PC-9 (cell line): ENCODE measurements at regions of chr9 and their contacts with region 1.

Region 1: GRCh38 chr9:121640076-121640475 is 11.4 kb upstream of the DAB2IP start:
- DNase-seq: peak in 1 of 2 experiments; percentile 44
- H3K4me3 ChIP-seq: no peak overlapping the region
- H3K27ac ChIP-seq: no peak overlapping the region
- H3K4me1 ChIP-seq: peaks cover 9% of the 10 kb centered on the region; the same call in 1 of the 2 replicates
- H3K27me3 ChIP-seq: no peaks in the 10 kb centered on the region
- CTCF ChIP-seq: peak; percentile 73

Region 2: GRCh38 chr9:121589986-121590385 is 50.1 kb before region 1 on chr9:
- CTCF ChIA-PET with region 1: no interaction called
- POLR2A ChIA-PET with region 1: no interaction called
- intact Hi-C with region 1: no loop called
- DNase-seq: no peak
- H3K4me3 ChIP-seq: no peak overlapping the region
- H3K27ac ChIP-seq: no peak overlapping the region
- H3K4me1 ChIP-seq: no peaks in the 10 kb centered on the region
- H3K27me3 ChIP-seq: peaks cover 42% of the 10 kb centered on the region
- CTCF ChIP-seq: no peak

Region 3: GRCh38 chr9:122031776-122032175 is 391.7 kb after region 1 on chr9:
- CTCF ChIA-PET with region 1: no interaction called
- POLR2A ChIA-PET with region 1: no interaction called
- intact Hi-C with region 1: no loop called
- DNase-seq: no peak
- H3K4me3 ChIP-seq: no peak overlapping the region
- H3K27ac ChIP-seq: no peak overlapping the region
- H3K4me1 ChIP-seq: no peaks in the 10 kb centered on the region
- H3K27me3 ChIP-seq: no peaks in the 10 kb centered on the region
- CTCF ChIP-seq: no peak

Region 4: GRCh38 chr9:122042056-122042455 is 402.0 kb after region 1 on chr9:
- CTCF ChIA-PET with region 1: interaction called, 12 read pairs
- POLR2A ChIA-PET with region 1: no interaction called
- intact Hi-C with region 1: no loop called
- DNase-seq: no peak
- H3K4me3 ChIP-seq: no peak overlapping the region
- H3K27ac ChIP-seq: no peak overlapping the region
- H3K4me1 ChIP-seq: no peaks in the 10 kb centered on the region
- H3K27me3 ChIP-seq: no peaks in the 10 kb centered on the region
- CTCF ChIP-seq: no peak